Psoas muscle (tissue), 8 donors: ENCODE measurements at regions of chr9 and their contacts with region 1.

Region 1: GRCh38 chr9:35116898-35117551 is 1.4 kb upstream of the ATOSB start:
- DNase-seq: peak; percentile 86 to 93
- ATAC-seq: peak; percentile 84 to 91 (median 86)
- H3K4me3 ChIP-seq: peak overlapping the region; percentile 68
- H3K27ac ChIP-seq: peak overlapping the region; percentile 75
- H3K4me1 ChIP-seq: peaks cover 10% of the 10 kb centered on the region
- H3K27me3 ChIP-seq: no peaks in the 10 kb centered on the region
- CTCF ChIP-seq: peak; percentile 96

Region 2: DNA sequence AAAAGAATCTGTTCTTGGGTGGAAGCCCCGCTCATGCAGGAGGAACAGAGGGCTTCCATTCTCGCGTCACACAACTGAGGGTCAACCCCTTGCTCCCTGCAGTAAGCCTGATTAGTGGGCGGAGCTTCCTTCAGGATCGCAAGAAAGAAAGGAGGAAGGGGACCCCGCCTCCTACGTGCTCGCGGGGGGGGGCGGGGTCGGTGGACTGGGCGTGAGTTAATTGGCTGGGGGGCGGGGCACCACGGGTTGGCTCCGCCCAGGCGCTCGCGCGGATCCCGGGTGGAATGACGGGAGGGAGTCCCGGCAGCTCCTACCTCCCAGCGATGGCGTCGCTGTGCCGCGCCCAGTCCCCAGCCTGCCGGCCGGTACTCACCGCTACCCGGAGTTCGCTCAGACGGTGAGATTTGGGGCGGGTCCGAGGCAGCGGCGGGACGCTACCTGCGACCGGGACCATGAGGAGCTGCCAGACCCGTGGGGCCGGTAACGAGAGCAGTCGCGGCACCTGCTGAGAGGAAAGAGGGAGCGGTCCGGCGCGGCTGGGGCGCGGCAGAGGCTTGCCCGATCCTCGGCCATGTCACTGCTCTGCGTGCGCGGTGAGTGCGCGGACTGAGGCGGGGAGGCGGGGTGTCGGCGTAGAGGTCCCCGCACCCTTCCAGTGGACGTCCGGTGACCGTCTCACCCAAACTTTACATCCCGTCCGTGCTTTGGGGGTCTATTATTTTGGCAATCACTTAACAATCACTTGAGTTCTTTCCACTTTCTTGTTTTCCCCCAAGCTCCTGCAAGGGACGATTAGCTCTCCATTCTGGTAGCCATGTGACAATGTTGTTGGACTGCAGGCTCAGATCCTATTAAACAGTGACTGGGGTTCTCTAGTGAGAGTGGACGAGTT is 44.9 kb after region 1 on chr9 and contains the start of gene UNC13B:
- intact Hi-C with region 1: loop called (anchors 1 to 5 kb)
- DNase-seq: peak; percentile 95 to 97
- ATAC-seq: peak; percentile 98 to 99 (median 98)
- H3K4me3 ChIP-seq: peak within 1 kb of the TSS; percentile 80
- H3K27ac ChIP-seq: peak within 1 kb of the TSS; percentile 95
- H3K4me1 ChIP-seq: peaks cover 24% of the 10 kb centered on the region
- H3K27me3 ChIP-seq: no peaks in the 10 kb centered on the region
- CTCF ChIP-seq: peak; percentile 19
- total RNA-seq, gene UNC13B: 10.5 to 12.9 (median 11.5) TPM

Region 3: GRCh38 chr9:35374436-35374835 is 257.4 kb after region 1 on chr9:
- intact Hi-C with region 1: loop called in 1 of 2 experiments (anchors 10 kb)
- DNase-seq: no peak
- ATAC-seq: peak; percentile 39 to 76 (median 62)
- H3K4me3 ChIP-seq: peak overlapping the region; percentile 11
- H3K27ac ChIP-seq: peak overlapping the region; percentile 71
- H3K4me1 ChIP-seq: peaks cover 13% of the 10 kb centered on the region
- H3K27me3 ChIP-seq: no peaks in the 10 kb centered on the region
- CTCF ChIP-seq: no peak

Region 4: GRCh38 chr9:35395076-35395705 is 278.2 kb after region 1 on chr9:
- intact Hi-C with region 1: loop called in 1 of 2 experiments (anchors 10 kb)
- DNase-seq: peak in 1 of 2 donors; percentile 69
- ATAC-seq: peak in 1 of 4 donors; percentile 60
- H3K4me3 ChIP-seq: no peak overlapping the region
- H3K27ac ChIP-seq: no peak overlapping the region
- H3K4me1 ChIP-seq: no peaks in the 10 kb centered on the region
- H3K27me3 ChIP-seq: no peaks in the 10 kb centered on the region
- CTCF ChIP-seq: no peak

Region 5: DNA sequence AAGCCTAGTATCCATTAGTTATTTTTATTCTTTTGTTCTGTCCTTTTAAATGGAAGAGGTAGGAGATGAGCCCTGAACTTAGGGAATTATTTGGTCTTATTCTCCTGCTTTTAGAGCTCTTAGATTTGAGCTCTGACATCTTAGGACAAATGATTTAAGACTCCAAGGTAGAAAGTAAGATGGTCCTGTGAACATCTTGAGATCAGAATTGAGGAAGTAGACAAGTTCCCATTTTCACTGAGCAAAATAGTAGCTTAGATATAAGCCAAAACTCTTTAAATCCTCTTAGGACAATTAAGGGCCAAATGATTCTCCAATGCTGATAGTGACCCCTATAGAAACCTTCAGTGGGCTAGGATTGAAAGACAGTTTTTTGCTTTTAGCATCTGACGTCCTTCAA is 319.9 kb after region 1 on chr9:
- intact Hi-C with region 1: no loop called
- DNase-seq: no peak
- ATAC-seq: no peak
- H3K4me3 ChIP-seq: no peak overlapping the region
- H3K27ac ChIP-seq: no peak overlapping the region
- H3K4me1 ChIP-seq: no peaks in the 10 kb centered on the region
- H3K27me3 ChIP-seq: no peaks in the 10 kb centered on the region
- CTCF ChIP-seq: no peak

Region 6: DNA sequence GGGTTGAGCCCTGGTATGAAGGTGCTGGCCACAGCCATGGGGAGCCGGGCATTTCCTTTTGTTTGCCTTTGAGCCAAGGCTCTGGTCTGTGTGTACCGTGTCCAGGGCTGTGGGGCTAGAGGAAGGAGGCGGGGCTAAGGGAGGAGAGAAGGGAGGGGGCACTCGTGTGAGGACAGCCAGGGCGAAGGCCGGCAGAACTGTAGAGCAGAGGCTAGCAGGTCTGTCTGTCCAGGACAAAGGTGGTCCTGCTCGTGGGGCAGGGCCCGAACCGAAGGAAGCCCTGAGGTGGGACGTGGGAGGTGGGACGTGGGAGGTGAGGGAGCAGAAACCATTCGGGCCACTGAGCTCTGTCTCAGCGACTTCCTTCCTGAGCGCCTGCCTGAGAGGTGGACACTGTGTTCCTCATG is 446.8 kb after region 1 on chr9:
- intact Hi-C with region 1: loop called in 1 of 2 experiments (anchors 5 kb)
- DNase-seq: peak; percentile 71 to 85
- ATAC-seq: peak; percentile 52 to 64 (median 58)
- H3K4me3 ChIP-seq: peak overlapping the region; percentile 58
- H3K27ac ChIP-seq: peak overlapping the region; percentile 90
- H3K4me1 ChIP-seq: peaks cover 82% of the 10 kb centered on the region
- H3K27me3 ChIP-seq: no peaks in the 10 kb centered on the region
- CTCF ChIP-seq: no peak

Region 7: DNA sequence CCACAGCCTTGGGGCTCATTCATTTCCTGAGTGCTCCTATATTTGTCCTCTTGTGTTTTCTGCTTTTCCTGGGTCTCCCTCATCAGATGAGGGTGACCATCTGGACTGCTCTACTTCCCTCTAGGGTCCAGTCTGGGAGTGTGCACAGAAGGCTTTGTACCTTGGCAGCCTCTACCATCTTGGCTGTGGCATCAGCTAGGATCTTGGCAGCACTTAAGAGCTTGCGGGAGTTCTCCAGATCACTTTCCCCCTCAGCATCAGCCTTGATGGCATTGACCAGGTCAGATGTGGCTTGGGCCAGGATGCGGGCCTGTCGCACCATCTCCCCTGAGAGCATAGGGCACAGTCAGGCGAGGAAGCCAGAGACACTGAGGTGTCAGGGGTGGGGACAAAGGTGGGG is 599.2 kb after region 1 on chr9:
- intact Hi-C with region 1: no loop called
- DNase-seq: no peak
- ATAC-seq: peak in 3 of 4 donors; percentile 50 to 82 (median 63)
- H3K4me3 ChIP-seq: no peak overlapping the region
- H3K27ac ChIP-seq: no peak overlapping the region
- H3K4me1 ChIP-seq: no peaks in the 10 kb centered on the region
- H3K27me3 ChIP-seq: no peaks in the 10 kb centered on the region
- CTCF ChIP-seq: no peak